Naive thymus-derived CD4-positive, alpha-beta T cell (primary cell): ENCODE measurements at regions of chr16 and their contacts with region 1.

Region 1: DNA sequence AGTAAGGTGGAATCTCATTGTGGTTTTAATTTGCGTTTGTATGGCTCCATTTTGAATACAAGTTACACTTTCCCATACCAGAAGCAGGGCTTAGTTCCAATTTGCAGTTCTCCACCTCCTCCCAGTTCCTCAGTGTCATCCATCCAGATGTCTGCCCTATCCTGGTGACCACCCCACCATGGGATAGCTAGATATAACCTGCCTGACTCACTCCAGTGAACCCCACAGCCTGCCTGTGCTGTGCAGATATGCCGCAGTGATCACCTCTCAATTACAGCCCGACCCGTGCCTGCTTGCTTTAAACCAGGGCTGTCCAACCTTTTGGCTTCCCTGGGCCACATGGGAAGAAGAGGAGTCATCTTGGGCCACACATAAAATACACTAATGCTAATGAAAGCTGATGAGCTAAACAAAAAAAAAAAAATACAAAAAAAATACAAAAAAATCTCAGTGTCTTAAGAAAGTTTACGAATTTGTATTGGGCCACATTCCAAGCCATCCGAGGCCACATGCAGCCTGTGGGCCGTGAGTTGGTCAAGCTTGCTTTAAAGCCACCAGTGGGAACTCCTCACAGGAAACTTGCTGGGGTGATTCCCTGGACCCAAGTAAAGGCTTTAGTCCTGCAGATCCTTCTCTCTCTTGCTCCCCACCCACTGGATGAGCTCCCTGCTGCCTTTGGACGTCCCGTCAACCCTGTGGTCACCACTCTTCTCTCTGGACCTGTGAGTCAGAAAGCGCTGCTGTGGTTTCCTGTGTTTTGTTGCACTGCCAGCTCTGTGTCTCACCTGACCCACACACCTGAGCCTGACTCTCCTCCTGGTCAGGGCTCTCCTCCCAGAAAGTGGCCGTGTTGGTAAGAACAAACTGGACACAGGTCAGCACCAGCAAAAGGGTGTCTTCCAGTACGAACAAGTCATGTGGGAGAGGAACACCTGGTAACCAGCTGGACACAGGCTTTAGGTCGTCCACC is 83.0 kb downstream of the EMP2 start:
- DNase-seq: peak in 2 of 9 donors; percentile 3 to 12
- ATAC-seq: no peak
- H3K4me3 ChIP-seq: no peak overlapping the region
- H3K4me3 Mint-ChIP-seq: peak overlapping the region in 1 of 10 donors; percentile 13
- H3K27ac ChIP-seq: no peak overlapping the region
- H3K27ac Mint-ChIP-seq: no peak overlapping the region
- H3K4me1 ChIP-seq: no peaks in the 10 kb centered on the region
- H3K4me1 Mint-ChIP-seq: peaks cover 0 to 7% (median 4%) of the 10 kb centered on the region in 7 donors
- H3K27me3 ChIP-seq: no peaks in the 10 kb centered on the region
- H3K27me3 Mint-ChIP-seq: no peaks in the 10 kb centered on the region

Region 2: GRCh38 chr16:10447289-10447688 is 50.1 kb before region 1 on chr16:
- CTCF ChIA-PET with region 1: no interaction called
- POLR2A ChIA-PET with region 1: no interaction called
- intact Hi-C with region 1: loop called in 1 of 2 experiments (anchors 10 kb)
- DNase-seq: no peak
- ATAC-seq: no peak
- H3K4me3 ChIP-seq: no peak overlapping the region
- H3K4me3 Mint-ChIP-seq: no peak overlapping the region
- H3K27ac ChIP-seq: no peak overlapping the region
- H3K27ac Mint-ChIP-seq: no peak overlapping the region
- H3K4me1 ChIP-seq: no peaks in the 10 kb centered on the region
- H3K4me1 Mint-ChIP-seq: peaks cover 0 to 15% (median 10%) of the 10 kb centered on the region in 7 donors
- H3K27me3 ChIP-seq: no peaks in the 10 kb centered on the region
- H3K27me3 Mint-ChIP-seq: no peaks in the 10 kb centered on the region

Region 3: GRCh38 chr16:10683170-10683569 is 185.8 kb after region 1 on chr16:
- CTCF ChIA-PET with region 1: no interaction called
- POLR2A ChIA-PET with region 1: no interaction called
- intact Hi-C with region 1: no loop called
- DNase-seq: no peak
- ATAC-seq: no peak
- H3K4me3 ChIP-seq: no peak overlapping the region
- H3K4me3 Mint-ChIP-seq: no peak overlapping the region
- H3K27ac ChIP-seq: no peak overlapping the region
- H3K27ac Mint-ChIP-seq: no peak overlapping the region
- H3K4me1 ChIP-seq: no peaks in the 10 kb centered on the region
- H3K4me1 Mint-ChIP-seq: no peaks in the 10 kb centered on the region
- H3K27me3 ChIP-seq: no peaks in the 10 kb centered on the region
- H3K27me3 Mint-ChIP-seq: peaks cover 0 to 13% (median 6%) of the 10 kb centered on the region in 5 donors